ENCODE measurements at regions of chr14 and their contacts with region 1.

Region 1: GRCh38 chr14:97930166-97930565 is 1133.0 kb downstream of the VRK1 start:
- DNase-seq: no peak
- ATAC-seq: no peak
- H3K4me3 ChIP-seq: no peak overlapping the region
- H3K27ac ChIP-seq: no peak overlapping the region
- H3K4me1 ChIP-seq: no peaks in the 10 kb centered on the region
- H3K27me3 ChIP-seq: peaks cover 0 to 2% (median 0%) of the 10 kb centered on the region in 7 donors
- CTCF ChIP-seq: no peak

Region 2: DNA sequence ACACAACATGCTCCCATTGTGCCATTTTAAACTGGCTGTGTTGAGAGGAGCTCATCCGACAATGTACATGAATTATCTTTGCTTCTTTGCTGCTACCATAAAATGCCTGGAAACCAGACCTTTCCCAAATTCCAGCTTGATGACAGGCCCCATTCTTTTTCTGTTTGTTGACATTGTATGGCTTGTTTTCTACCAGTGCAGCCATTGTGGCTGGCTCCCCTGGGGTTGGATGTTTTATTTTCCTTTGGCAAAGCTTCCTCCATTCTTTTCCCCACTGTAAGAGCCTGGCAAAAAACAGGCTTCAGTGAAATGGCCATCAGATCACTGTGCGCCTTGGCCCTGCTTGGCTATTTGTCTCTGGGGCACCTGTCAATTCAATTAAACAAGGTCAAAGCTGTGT is 600.5 kb before region 1 on chr14:
- intact Hi-C with region 1: no loop called
- DNase-seq: no peak
- ATAC-seq: no peak
- H3K4me3 ChIP-seq: no peak overlapping the region
- H3K27ac ChIP-seq: no peak overlapping the region
- H3K4me1 ChIP-seq: no peaks in the 10 kb centered on the region
- H3K27me3 ChIP-seq: peaks cover 0 to 5% (median 0%) of the 10 kb centered on the region in 7 donors
- CTCF ChIP-seq: no peak

Region 3: GRCh38 chr14:97893880-97894279 is 36.3 kb before region 1 on chr14:
- intact Hi-C with region 1: loop called in 1 of 10 experiments (anchors 1 kb)
- DNase-seq: no peak
- ATAC-seq: no peak
- H3K4me3 ChIP-seq: no peak overlapping the region
- H3K27ac ChIP-seq: no peak overlapping the region
- H3K4me1 ChIP-seq: no peaks in the 10 kb centered on the region
- H3K27me3 ChIP-seq: peaks cover 0 to 5% (median 0%) of the 10 kb centered on the region in 7 donors
- CTCF ChIP-seq: no peak

Region 4: DNA sequence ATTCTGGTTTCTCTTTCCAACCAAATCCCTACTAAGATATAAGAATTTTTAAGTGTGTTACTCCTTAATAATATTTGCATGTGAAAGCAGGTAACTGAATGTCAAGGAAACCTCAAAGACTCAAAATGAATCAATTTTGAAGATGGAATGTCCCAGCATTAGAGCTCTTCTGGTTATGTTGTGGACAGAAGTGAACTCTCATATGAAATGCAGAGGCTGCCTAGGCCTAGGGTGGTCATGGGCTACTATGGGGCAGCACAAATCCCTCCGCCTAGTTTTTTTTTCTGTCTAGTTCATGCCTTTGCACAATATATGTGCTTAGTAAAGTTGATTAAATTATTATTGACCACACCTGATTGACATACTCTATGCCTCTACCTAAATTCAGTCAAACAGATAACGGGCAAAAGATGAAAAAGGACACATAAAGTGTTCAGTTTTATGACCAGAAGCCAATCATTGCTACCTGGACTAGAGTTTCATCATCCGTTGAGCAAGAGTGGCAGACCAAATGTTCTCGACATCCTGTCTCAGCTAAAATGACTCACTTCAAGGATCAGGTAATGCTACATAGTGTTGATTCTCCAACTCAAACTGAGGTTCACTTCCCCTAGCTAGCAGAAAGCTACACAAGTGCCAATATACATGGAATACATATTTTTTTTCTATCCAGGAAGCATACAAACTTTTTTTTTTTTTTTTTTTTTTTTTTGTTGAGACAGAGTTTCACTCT is 78.4 kb after region 1 on chr14:
- intact Hi-C with region 1: no loop called
- DNase-seq: no peak
- ATAC-seq: no peak
- H3K4me3 ChIP-seq: no peak overlapping the region
- H3K27ac ChIP-seq: no peak overlapping the region
- H3K4me1 ChIP-seq: no peaks in the 10 kb centered on the region
- H3K27me3 ChIP-seq: no peaks in the 10 kb centered on the region
- CTCF ChIP-seq: no peak